ENCODE measurements at regions of chr4 and their contacts with region 1.

Region 1: GRCh38 chr4:98995183-98996055 is at the start of gene METAP1:
- DNase-seq: peak; percentile 98
- H3K4me3 ChIP-seq: peak within 1 kb of the TSS; percentile 92
- H3K27ac ChIP-seq: peak within 1 kb of the TSS; percentile 72
- H3K4me1 ChIP-seq: peaks cover 15% of the 10 kb centered on the region
- CTCF ChIP-seq: peak; percentile 86
- total RNA-seq, gene METAP1: 42.6 and 46.8 TPM in 2 replicates

Region 2: DNA sequence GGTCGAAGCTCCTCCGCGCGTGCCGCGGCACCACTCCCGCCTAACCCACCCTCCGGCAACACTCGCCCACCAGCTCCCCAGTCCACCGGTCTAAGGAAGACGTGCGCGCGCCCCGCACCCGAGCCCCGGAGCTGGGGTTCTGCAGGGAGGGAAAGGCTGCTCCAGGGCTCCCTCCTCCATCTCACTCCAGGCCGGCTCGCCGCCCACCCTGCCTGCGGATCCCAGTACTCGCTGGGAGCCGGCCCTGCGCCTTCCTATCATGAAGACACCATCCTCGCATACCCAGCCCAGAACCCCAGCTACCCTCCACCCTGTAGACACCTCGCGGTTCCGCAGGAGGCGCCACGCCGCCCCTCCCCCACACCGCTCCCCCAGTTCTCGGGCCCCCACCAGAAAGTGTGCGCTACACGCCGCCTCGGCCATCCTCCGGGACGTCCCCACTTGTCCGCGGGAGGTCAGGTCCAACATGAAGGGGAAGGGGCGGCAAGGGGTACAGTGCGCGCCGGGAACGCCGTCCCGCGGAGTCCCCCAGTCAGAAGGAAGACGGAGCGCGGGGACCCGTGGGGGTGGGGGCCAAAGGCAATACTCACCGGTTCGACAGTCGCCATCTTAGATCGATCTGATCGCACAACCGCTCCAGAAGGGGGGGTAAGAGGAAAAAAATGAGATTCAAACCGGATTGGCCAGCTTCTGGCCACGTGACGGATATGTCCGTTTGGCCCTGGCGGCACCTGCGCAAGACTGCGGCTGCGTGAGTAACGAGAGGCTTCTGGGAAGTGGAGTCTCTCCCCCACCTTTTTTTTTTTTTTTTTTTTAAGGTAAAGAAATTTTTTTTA is 66.7 kb before region 1 on chr4 and contains the start of gene EIF4E:
- CTCF ChIA-PET with region 1: no interaction called
- POLR2A ChIA-PET with region 1: interaction called, 4 read pairs
- intact Hi-C with region 1: loop called (anchors 1 kb)
- DNase-seq: peak; percentile 99
- H3K4me3 ChIP-seq: peak within 1 kb of the TSS; percentile 88
- H3K27ac ChIP-seq: peak within 1 kb of the TSS; percentile 83
- H3K4me1 ChIP-seq: peaks cover 32% of the 10 kb centered on the region
- CTCF ChIP-seq: peak; percentile 45
- total RNA-seq, gene EIF4E: 136 and 152 TPM in 2 replicates

Region 3: GRCh38 chr4:99054428-99054994 is 59.1 kb after region 1 on chr4:
- CTCF ChIA-PET with region 1: interaction called, 18 read pairs
- POLR2A ChIA-PET with region 1: interaction called, 8 read pairs
- intact Hi-C with region 1: loop called (anchors 1 kb)
- DNase-seq: no peak
- H3K4me3 ChIP-seq: no peak overlapping the region
- H3K27ac ChIP-seq: no peak overlapping the region
- H3K4me1 ChIP-seq: peaks cover 14% of the 10 kb centered on the region
- CTCF ChIP-seq: no peak

Region 4: GRCh38 chr4:99088481-99089365 is 93.3 kb after region 1 on chr4 and contains the start of gene ADH5:
- CTCF ChIA-PET with region 1: interaction called, 3 read pairs
- POLR2A ChIA-PET with region 1: interaction called, 20 read pairs
- intact Hi-C with region 1: loop called (anchors 1 kb)
- DNase-seq: peak; percentile 93
- H3K4me3 ChIP-seq: peak within 1 kb of the TSS; percentile 75
- H3K27ac ChIP-seq: peak within 1 kb of the TSS; percentile 50
- H3K4me1 ChIP-seq: peaks cover 23% of the 10 kb centered on the region
- CTCF ChIP-seq: no peak
- total RNA-seq, gene ADH5: 50.0 and 62.6 TPM in 2 replicates

Region 5: GRCh38 chr4:99405433-99406115 is 410.2 kb after region 1 on chr4:
- CTCF ChIA-PET with region 1: no interaction called
- POLR2A ChIA-PET with region 1: no interaction called
- intact Hi-C with region 1: loop called (anchors 1 kb)
- DNase-seq: peak; percentile 52
- H3K4me3 ChIP-seq: no peak overlapping the region
- H3K27ac ChIP-seq: no peak overlapping the region
- H3K4me1 ChIP-seq: no peaks in the 10 kb centered on the region
- CTCF ChIP-seq: peak; percentile 93

Region 6: DNA sequence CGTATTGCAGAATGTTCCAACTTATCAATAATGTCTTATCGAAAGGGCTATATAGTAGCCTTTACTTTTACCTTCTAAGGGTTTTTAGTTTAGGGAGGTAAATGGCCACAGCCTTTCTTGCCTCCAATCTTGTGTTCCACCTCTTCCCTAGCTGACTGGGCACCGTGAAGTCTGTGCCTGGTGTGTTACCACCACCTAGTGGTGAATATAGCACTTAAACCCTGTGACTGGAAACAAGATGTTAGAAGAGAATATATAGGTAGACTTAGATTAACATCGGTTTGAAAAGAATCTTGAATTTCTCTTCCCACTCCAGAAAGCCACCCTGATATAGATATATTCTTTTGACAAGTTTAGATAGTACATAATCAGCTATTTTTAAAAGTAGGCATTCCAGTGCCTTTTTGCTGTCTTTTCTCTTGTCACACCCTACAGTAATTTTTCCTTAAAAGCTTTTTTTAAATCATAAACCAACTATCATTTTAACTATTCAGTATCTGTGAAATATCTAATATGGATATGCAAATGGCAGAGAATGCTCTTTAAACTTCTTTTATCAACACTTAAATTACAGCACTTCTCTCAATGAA is 467.6 kb after region 1 on chr4:
- CTCF ChIA-PET with region 1: no interaction called
- POLR2A ChIA-PET with region 1: no interaction called
- intact Hi-C with region 1: loop called (anchors 5 kb)
- DNase-seq: peak; percentile 61
- H3K4me3 ChIP-seq: no peak overlapping the region
- H3K27ac ChIP-seq: no peak overlapping the region
- H3K4me1 ChIP-seq: no peaks in the 10 kb centered on the region
- CTCF ChIP-seq: peak; percentile 90

Region 7: GRCh38 chr4:99563310-99564186 is 568.1 kb after region 1 on chr4 and contains the start of gene TRMT10A:
- CTCF ChIA-PET with region 1: no interaction called
- POLR2A ChIA-PET with region 1: no interaction called
- intact Hi-C with region 1: loop called (anchors 10 kb)
- DNase-seq: peak; percentile 96
- H3K4me3 ChIP-seq: peak within 1 kb of the TSS; percentile 80
- H3K27ac ChIP-seq: peak within 1 kb of the TSS; percentile 78
- H3K4me1 ChIP-seq: peaks cover 12% of the 10 kb centered on the region
- CTCF ChIP-seq: no peak
- total RNA-seq, gene TRMT10A: 7.9 and 13.3 TPM in 2 replicates